Activated CD4-positive, alpha-beta T cell treated with anti-CD3 and anti-CD28 coated beads for 36 hours (primary cell): ENCODE measurements at regions of chr9 and their contacts with region 1.

Region 1: GRCh38 chr9:20356403-20357035 is 265.8 kb downstream of the MLLT3 start:
- DNase-seq: peak; percentile 76
- ATAC-seq: peak; percentile 34
- H3K4me3 Mint-ChIP-seq: no peak overlapping the region
- H3K27ac Mint-ChIP-seq: peak overlapping the region; percentile 0
- H3K4me1 Mint-ChIP-seq: peaks cover 62% of the 10 kb centered on the region
- H3K27me3 Mint-ChIP-seq: no peaks in the 10 kb centered on the region

Region 2: DNA sequence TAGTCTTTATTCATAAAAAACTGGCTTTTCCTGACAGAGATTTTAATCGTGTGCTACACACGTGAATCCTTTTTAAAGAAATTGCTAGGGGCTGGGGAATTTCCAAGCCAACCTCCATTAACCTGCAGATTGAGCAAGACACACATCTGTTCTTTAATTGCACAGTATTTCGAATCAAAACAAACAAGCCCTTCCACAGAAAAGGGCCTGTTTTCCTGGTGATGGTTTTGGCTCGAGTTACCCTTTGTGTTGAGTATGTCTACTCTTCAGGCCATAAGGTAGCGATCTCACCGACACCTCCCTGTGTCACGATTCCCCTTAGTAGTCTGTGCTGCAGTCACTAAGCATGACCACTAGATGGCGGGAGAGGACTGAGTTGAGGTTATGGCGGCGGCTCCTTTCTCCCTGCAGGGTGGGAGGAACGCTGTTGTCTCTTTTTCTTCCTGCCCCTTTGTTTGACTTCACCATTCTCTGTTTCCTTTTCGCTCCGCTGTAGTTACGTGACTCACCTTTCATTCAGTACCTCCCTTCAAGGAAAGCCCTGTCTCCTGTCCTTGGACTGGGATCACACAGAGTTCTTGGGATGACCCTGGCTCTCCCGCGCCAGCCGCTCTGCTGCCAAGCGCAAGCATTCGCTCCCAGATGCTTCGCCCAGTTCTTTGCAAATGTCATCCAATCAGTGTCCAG is 430.6 kb before region 1 on chr9:
- CTCF ChIA-PET with region 1: interaction called, 3 read pairs
- POLR2A ChIA-PET with region 1: no interaction called
- intact Hi-C with region 1: loop called (anchors 1 to 2 kb)
- DNase-seq: peak; percentile 87
- ATAC-seq: peak; percentile 98
- H3K4me3 Mint-ChIP-seq: peak overlapping the region; percentile 60
- H3K27ac Mint-ChIP-seq: peak overlapping the region; percentile 22
- H3K4me1 Mint-ChIP-seq: peaks cover 15% of the 10 kb centered on the region
- H3K27me3 Mint-ChIP-seq: peaks cover 16% of the 10 kb centered on the region

Region 3: DNA sequence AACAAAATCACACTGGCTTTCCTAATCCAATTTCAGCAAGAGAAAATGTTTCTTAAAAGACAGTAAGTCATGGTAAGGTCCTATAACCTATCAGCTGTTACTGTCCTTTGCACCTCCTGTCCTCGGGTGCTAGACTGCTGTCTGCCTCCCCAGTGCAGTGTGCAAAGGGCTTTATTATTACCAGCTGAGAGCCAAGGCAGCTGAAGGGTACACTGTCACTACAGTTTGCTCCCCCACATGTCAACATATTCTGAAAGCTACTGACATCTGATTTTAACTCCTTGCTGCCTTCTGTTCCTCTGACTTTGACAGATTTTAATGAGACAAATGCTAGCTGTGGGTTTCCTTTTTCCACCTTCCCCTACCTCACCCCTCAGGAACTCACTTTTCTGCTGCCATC is 178.3 kb before region 1 on chr9:
- CTCF ChIA-PET with region 1: no interaction called
- POLR2A ChIA-PET with region 1: no interaction called
- intact Hi-C with region 1: no loop called
- DNase-seq: no peak
- ATAC-seq: no peak
- H3K4me3 Mint-ChIP-seq: no peak overlapping the region
- H3K27ac Mint-ChIP-seq: no peak overlapping the region
- H3K4me1 Mint-ChIP-seq: peaks cover 4% of the 10 kb centered on the region
- H3K27me3 Mint-ChIP-seq: peaks cover 13% of the 10 kb centered on the region

Region 4: DNA sequence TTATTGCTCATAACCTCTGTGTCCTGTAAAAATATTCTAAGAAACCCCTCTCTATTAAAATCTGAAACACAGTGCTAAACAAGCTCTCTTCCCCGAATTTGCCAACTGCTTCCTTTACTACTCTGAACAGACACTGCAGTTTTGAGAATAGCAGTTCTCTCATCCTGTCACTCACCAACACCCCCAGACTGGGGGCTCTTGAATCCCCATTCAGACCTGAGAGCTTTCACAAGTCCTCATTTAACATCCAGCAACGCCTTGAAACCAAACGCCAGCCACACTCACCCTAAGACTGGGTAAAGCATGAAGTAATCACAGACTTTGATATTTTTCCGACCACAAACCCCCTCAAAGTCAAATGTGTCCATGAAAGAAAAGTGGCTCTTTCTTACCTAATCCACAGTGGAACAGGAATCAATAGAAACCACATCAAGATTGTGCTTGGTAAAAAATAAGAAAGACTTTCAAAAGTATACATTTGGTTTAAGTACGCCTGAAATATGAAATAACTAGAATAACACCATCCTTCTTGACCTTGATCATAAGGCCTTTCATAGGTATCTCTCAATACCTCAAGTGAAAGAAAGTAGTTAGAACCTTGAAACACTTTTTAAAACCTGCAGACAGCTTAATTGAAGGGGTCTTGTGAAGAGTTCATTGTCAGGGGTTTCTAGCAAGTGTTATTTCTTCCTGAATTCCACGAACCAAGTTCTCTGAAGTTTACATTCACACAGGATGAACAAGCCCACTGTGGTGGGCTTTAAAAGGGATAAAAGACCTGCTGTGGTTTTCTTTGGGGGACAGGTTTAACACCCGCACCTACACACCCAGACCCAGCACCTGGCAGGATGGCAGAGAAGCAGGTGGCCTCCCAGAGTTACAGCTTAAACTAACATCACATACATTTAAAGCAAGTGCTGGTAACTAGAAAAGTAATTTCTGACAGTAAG is 146.9 kb before region 1 on chr9:
- CTCF ChIA-PET with region 1: interaction called, 3 read pairs
- POLR2A ChIA-PET with region 1: interaction called, 3 read pairs
- intact Hi-C with region 1: loop called in 1 of 2 experiments (anchors 2 kb)
- DNase-seq: peak; percentile 77
- ATAC-seq: peak; percentile 79
- H3K4me3 Mint-ChIP-seq: peak overlapping the region; percentile 31
- H3K27ac Mint-ChIP-seq: peak overlapping the region; percentile 84
- H3K4me1 Mint-ChIP-seq: peaks cover 25% of the 10 kb centered on the region
- H3K27me3 Mint-ChIP-seq: no peaks in the 10 kb centered on the region

Region 5: GRCh38 chr9:20552874-20553575 is 196.5 kb after region 1 on chr9:
- CTCF ChIA-PET with region 1: no interaction called
- POLR2A ChIA-PET with region 1: no interaction called
- intact Hi-C with region 1: loop called in 1 of 2 experiments (anchors 2 kb)
- DNase-seq: no peak
- ATAC-seq: peak; percentile 37
- H3K4me3 Mint-ChIP-seq: no peak overlapping the region
- H3K27ac Mint-ChIP-seq: peak overlapping the region; percentile 28
- H3K4me1 Mint-ChIP-seq: peaks cover 68% of the 10 kb centered on the region
- H3K27me3 Mint-ChIP-seq: no peaks in the 10 kb centered on the region

Region 6: DNA sequence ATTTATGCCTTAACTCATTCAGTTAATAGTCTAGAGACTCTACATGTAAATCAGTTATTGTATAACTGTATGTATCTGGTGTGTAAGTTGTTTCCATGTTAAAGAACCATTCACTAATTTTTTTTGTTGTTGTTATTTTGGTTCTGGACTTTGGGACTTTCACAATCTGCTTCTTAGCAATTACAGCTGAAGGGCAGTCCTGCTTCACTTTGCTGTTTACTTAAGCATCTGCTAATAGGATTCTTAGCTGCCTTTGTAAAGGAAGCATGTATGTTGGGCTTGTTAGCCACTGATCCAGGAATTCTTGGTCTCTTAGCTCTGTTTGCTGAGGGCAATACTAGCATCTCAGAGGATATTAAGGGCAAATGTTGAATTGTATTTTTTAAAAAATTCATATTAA is 424.6 kb after region 1 on chr9:
- CTCF ChIA-PET with region 1: no interaction called
- POLR2A ChIA-PET with region 1: no interaction called
- intact Hi-C with region 1: no loop called
- DNase-seq: no peak
- ATAC-seq: no peak
- H3K4me3 Mint-ChIP-seq: no peak overlapping the region
- H3K27ac Mint-ChIP-seq: no peak overlapping the region
- H3K4me1 Mint-ChIP-seq: no peaks in the 10 kb centered on the region
- H3K27me3 Mint-ChIP-seq: no peaks in the 10 kb centered on the region

Region 7: GRCh38 chr9:20941174-20941690 is 584.7 kb after region 1 on chr9:
- CTCF ChIA-PET with region 1: interaction called, 6 read pairs
- POLR2A ChIA-PET with region 1: no interaction called
- intact Hi-C with region 1: loop called (anchors 1 kb)
- DNase-seq: peak; percentile 68
- ATAC-seq: peak; percentile 98
- H3K4me3 Mint-ChIP-seq: no peak overlapping the region
- H3K27ac Mint-ChIP-seq: no peak overlapping the region
- H3K4me1 Mint-ChIP-seq: peaks cover 3% of the 10 kb centered on the region
- H3K27me3 Mint-ChIP-seq: no peaks in the 10 kb centered on the region

Region 8: GRCh38 chr9:21110708-21111576 is 754.4 kb after region 1 on chr9:
- CTCF ChIA-PET with region 1: interaction called, 3 read pairs
- POLR2A ChIA-PET with region 1: no interaction called
- intact Hi-C with region 1: loop called (anchors 1 to 2 kb)
- DNase-seq: no peak
- ATAC-seq: peak; percentile 75
- H3K4me3 Mint-ChIP-seq: no peak overlapping the region
- H3K27ac Mint-ChIP-seq: no peak overlapping the region
- H3K4me1 Mint-ChIP-seq: no peaks in the 10 kb centered on the region
- H3K27me3 Mint-ChIP-seq: no peaks in the 10 kb centered on the region